ENCODE measurements at regions of chr19 and their contacts with region 1.

Region 1: DNA sequence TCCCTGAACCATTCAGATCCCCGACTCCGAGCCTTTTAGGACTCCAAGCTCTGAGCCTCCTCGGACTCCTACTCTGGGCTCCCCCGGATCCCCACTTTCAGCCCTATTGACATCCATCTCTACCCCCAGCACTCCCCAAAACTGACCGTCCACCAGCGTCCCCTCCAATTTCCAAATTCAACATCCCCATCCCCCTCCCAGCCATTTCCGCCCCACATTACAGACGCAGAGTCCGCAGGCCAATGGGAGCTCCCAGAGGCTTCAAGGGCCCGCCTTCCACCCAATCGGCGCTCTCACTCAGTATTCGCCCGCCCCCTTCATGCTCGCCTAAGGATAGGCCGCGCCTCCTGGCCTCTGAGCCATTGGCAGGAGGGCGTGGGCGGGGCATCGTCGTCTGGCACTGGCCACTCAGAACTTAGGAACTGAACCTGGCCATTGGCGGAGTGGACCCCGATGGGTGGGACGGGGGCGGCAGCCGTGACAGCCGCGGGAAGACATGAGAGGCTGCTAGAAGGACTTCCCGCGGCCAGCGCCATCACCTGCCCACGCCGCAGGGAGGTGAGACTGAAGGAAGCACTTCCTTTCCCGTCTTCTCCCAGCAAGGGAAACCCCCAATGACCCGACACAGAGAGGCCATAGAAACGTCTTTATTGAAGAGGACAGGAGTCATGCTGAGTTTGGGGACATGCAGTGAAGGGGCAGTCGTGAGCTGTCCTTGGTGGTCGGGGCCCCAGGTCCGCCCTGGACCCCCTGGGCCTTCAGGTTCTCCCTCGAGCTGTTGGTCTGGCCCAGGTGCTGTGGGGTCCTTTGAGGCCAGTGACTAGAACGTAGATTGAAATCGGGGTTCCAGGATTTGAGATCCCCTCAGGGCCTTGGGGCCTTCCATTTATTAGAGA is at the start of gene ALKBH6:
- DNase-seq: peak; percentile 94 to 98 (median 97)
- ATAC-seq: peak; percentile 100
- H3K4me3 ChIP-seq: peak within 1 kb of the TSS; percentile 93
- H3K4me3 Mint-ChIP-seq: peak within 1 kb of the TSS; percentile 92 to 99 (median 95)
- H3K27ac ChIP-seq: peak within 1 kb of the TSS; percentile 86
- H3K27ac Mint-ChIP-seq: peak within 1 kb of the TSS; percentile 88 to 99 (median 94)
- H3K4me1 ChIP-seq: peaks cover 12 to 18% of the 10 kb centered on the region in 2 donors
- H3K4me1 Mint-ChIP-seq: peaks cover 36 to 53% (median 46%) of the 10 kb centered on the region in 7 donors
- H3K27me3 ChIP-seq: no peaks in the 10 kb centered on the region
- H3K27me3 Mint-ChIP-seq: no peaks in the 10 kb centered on the region
- total RNA-seq, gene ALKBH6: 32.6 to 60.6 (median 49.3) TPM

Region 2: DNA sequence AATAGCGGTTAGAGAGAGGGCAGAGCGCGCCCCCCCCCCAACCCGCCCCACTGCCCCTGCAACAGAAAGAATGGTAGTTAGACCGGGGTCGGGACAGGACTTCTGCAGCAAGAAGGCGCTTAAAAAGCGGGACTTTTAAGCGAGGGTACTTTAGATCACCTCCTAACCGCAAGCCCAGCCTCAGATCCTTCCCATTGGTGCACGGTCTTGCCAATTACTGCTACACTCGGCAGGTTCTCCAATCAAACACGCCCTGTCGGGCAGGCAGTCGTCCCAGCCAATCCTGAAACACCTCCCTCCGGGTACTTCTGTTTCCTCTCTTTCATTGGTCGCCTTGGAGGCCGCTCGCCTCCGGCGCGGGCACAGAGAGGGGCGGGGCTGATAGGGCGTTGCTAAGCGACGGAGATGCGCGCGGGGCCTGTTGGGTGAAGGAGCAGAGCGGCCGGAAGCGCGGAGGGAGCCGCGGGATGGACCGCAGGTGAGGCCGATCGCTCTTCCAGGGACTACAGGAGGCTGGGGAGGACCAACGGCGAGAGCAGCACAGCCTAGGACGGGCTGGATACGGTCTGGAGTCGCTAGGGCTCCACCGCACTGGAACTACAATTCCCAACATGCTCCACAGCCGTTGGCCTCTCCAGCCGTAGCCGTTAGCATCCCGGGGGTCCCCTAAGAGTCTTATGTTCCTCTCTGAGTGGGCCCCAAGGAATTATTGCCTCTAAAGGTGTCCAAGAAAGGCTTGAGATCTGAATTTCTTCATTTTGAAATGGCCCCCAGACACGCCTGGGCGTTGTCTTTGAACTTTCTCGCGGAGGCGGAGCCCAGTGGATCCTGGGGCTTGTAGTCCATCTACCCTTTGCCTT is 256.3 kb before region 1 on chr19 and contains the start of gene PROSER3:
- CTCF ChIA-PET with region 1: no interaction called
- POLR2A ChIA-PET with region 1: no interaction called
- intact Hi-C with region 1: loop called in 1 of 2 experiments (anchors 2 kb)
- DNase-seq: peak; percentile 93 to 100 (median 99)
- ATAC-seq: peak; percentile 98
- H3K4me3 ChIP-seq: peak within 1 kb of the TSS; percentile 99
- H3K4me3 Mint-ChIP-seq: peak within 1 kb of the TSS; percentile 92 to 100 (median 96)
- H3K27ac ChIP-seq: peak within 1 kb of the TSS; percentile 92
- H3K27ac Mint-ChIP-seq: peak within 1 kb of the TSS; percentile 89 to 99 (median 95)
- H3K4me1 ChIP-seq: peaks cover 10 to 35% of the 10 kb centered on the region in 2 donors
- H3K4me1 Mint-ChIP-seq: peaks cover 13 to 42% (median 37%) of the 10 kb centered on the region in 7 donors
- H3K27me3 ChIP-seq: peaks cover 0 to 4% of the 10 kb centered on the region in 2 donors
- H3K27me3 Mint-ChIP-seq: peaks cover 0 to 12% (median 5%) of the 10 kb centered on the region in 5 donors
- total RNA-seq, gene PROSER3: 34.0 to 47.3 (median 39.7) TPM

Region 3: GRCh38 chr19:35869327-35870123 is 144.8 kb before region 1 on chr19:
- CTCF ChIA-PET with region 1: no interaction called
- POLR2A ChIA-PET with region 1: no interaction called
- intact Hi-C with region 1: loop called in 1 of 2 experiments (anchors 5 kb)
- DNase-seq: peak; percentile 55 to 88 (median 78)
- ATAC-seq: peak; percentile 95
- H3K4me3 ChIP-seq: no peak overlapping the region
- H3K4me3 Mint-ChIP-seq: peak overlapping the region; percentile 75 to 92 (median 82)
- H3K27ac ChIP-seq: no peak overlapping the region
- H3K27ac Mint-ChIP-seq: peak overlapping the region in 5 of 9 donors; percentile 12 to 68 (median 53)
- H3K4me1 ChIP-seq: peaks cover 16 to 18% of the 10 kb centered on the region in 2 donors
- H3K4me1 Mint-ChIP-seq: peaks cover 13 to 22% (median 17%) of the 10 kb centered on the region in 7 donors
- H3K27me3 ChIP-seq: peaks cover 5 to 7% of the 10 kb centered on the region in 2 donors
- H3K27me3 Mint-ChIP-seq: peaks cover 22 to 57% (median 42%) of the 10 kb centered on the region in 5 donors

Region 4: DNA sequence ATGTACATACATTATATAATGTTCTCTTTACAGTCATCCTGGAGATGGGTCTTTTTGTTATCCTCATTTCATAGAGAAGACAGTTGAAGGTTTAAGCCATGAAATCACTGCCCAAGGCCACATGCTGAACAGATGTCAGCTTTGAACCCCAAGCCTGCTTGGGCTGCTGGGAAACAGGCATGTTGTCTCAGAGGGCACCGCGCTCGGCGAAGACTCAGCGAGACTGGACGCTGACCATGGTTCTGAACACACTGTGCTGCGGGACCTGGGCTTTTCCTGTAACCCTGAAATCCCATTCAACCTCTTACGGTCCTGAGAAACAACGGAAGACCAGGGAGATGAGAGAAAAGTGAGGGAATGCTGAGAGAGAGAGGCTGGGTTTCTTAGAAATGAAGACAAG is 50.8 kb before region 1 on chr19:
- CTCF ChIA-PET with region 1: interaction called, 3 read pairs
- POLR2A ChIA-PET with region 1: no interaction called
- intact Hi-C with region 1: loop called in 1 of 2 experiments (anchors 1 kb)
- DNase-seq: peak in 7 of 9 donors; percentile 26 to 57 (median 47)
- ATAC-seq: no peak
- H3K4me3 ChIP-seq: no peak overlapping the region
- H3K4me3 Mint-ChIP-seq: no peak overlapping the region
- H3K27ac ChIP-seq: no peak overlapping the region
- H3K27ac Mint-ChIP-seq: no peak overlapping the region
- H3K4me1 ChIP-seq: peaks cover 10 to 11% of the 10 kb centered on the region in 2 donors
- H3K4me1 Mint-ChIP-seq: peaks cover 0 to 15% (median 9%) of the 10 kb centered on the region in 7 donors
- H3K27me3 ChIP-seq: no peaks in the 10 kb centered on the region
- H3K27me3 Mint-ChIP-seq: peaks cover 0 to 30% (median 0%) of the 10 kb centered on the region in 5 donors

Region 5: DNA sequence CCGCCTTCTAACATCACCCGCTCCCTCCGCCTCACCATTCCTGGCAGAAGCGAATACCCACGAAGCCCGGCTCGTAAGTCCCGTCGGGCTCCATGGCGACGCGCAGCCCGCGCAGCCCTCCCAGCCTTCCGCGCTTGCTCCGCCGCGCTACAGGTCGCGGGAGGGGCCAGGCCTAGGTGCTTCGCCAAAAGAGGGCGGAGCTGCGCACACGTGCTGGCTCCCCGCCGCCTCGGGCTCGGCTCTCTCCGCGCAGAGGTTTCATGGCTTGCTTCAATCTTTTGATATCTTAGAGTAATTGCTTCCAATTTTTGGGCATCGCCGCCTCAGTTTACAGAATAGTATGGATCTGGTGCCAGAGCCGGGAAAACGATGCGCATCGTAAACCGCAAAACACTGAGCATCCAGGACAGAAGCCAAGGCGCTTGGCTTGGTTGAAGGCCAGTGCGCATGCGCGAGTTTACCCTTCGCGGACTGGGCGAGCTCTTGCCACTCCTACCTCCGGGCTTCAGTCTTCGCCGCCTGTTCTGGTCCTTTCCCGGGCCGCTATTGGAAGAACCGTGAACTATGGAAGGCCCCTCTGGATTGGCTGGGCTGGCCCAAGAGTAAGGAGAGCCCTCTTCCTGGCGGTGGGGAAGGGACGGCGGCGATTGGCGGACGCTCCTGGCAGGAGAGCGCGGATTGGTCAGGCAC is 100.6 kb after region 1 on chr19 and contains the start of gene POLR2I:
- CTCF ChIA-PET with region 1: no interaction called
- POLR2A ChIA-PET with region 1: no interaction called
- intact Hi-C with region 1: loop called (anchors 1 kb)
- DNase-seq: peak; percentile 95 to 100 (median 99)
- ATAC-seq: peak; percentile 92
- H3K4me3 ChIP-seq: peak within 1 kb of the TSS; percentile 97
- H3K4me3 Mint-ChIP-seq: peak within 1 kb of the TSS; percentile 89 to 98 (median 96)
- H3K27ac ChIP-seq: peak within 1 kb of the TSS; percentile 90
- H3K27ac Mint-ChIP-seq: peak within 1 kb of the TSS; percentile 97 to 99 (median 98)
- H3K4me1 ChIP-seq: peaks cover 14 to 15% of the 10 kb centered on the region in 2 donors
- H3K4me1 Mint-ChIP-seq: peaks cover 27 to 54% (median 42%) of the 10 kb centered on the region in 7 donors
- H3K27me3 ChIP-seq: no peaks in the 10 kb centered on the region
- H3K27me3 Mint-ChIP-seq: peaks cover 0 to 5% (median 0%) of the 10 kb centered on the region in 5 donors
- total RNA-seq, gene POLR2I: 20.9 to 56.7 (median 44.7) TPM